ENCODE measurements at regions of chr11 and their contacts with region 1.

Region 1: DNA sequence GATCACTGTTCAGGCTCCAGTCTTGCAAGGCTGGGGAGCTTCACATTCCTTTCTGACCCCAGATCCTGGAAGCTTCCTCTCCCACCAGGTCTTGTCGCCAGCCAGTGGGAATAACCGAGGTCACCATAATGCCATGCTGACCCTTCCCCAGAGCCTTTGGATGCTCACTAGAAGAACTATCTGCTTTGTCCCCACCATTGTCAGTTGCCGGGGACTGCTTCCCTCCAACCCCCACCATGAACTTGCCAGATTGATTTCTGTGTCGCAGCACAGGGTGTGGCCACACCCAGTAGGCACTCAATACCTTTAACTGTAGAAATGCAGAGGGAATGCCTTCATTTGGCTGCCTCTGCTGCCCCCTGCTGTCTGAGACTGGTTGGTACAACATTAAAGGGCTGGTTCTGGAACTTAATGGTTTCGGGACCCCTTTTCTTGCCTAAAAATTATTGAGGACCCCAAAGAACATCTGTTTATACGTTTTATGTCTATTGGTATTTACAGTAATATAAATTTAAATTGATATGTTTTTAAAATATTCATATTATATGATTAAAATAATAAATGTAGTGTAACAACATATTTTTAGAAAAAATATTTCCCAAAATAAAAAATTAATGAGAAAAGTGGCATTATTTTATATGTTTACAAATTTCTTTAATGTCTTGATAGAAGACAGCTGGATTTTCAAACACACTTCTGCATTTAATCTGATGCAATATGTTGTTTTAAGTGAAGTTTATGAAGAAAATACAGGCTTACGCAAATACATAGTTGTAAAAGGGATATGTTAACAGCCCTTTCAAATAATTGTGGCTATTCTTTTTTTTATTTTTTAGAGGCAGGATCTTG is 6.7 kb upstream of the GDPD5 start:
- DNase-seq: peak; percentile 68
- H3K4me3 ChIP-seq: no peak overlapping the region
- H3K27ac ChIP-seq: no peak overlapping the region
- H3K4me1 ChIP-seq: 0 out of 2 replicates have a peak, but pooled peaks cover 3% of the 10 kb centered on the region
- H3K27me3 ChIP-seq: no peaks in the 10 kb centered on the region

Region 2: DNA sequence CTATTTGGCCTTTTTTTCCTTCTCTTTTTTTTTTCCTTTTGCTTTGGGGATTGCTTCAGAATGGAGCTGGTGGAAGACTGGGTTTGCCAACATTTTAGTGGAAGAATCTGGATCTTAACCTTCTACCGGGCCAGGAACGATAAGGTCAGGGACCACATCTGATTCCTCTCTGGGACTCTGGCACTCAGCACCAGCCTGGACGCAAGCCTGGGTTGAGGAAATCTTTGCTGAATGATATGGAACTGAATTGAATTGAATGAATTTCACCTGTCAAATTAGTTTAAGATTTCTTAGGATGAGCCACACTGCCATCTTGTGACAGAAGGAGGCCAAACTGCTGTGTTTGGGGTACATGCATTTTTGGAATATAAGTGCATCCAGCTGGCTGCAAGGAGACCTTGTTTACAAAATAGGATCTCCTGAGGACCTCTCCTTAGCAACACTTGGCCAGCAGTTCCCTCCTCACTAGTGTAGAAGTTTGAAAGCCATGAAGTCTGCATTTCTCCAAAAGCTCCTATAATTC is 261.5 kb before region 1 on chr11:
- in situ Hi-C with region 1: loop called (anchors 10 kb)
- DNase-seq: peak; percentile 47
- H3K4me3 ChIP-seq: no peak overlapping the region
- H3K27ac ChIP-seq: no peak overlapping the region
- H3K4me1 ChIP-seq: no peaks in the 10 kb centered on the region
- H3K27me3 ChIP-seq: no peaks in the 10 kb centered on the region

Region 3: GRCh38 chr11:75445315-75445953 is 87.0 kb before region 1 on chr11:
- in situ Hi-C with region 1: loop called (anchors 5 kb)
- DNase-seq: peak; percentile 59
- H3K4me3 ChIP-seq: no peak overlapping the region
- H3K27ac ChIP-seq: no peak overlapping the region
- H3K4me1 ChIP-seq: no peaks in the 10 kb centered on the region
- H3K27me3 ChIP-seq: no peaks in the 10 kb centered on the region

Region 4: DNA sequence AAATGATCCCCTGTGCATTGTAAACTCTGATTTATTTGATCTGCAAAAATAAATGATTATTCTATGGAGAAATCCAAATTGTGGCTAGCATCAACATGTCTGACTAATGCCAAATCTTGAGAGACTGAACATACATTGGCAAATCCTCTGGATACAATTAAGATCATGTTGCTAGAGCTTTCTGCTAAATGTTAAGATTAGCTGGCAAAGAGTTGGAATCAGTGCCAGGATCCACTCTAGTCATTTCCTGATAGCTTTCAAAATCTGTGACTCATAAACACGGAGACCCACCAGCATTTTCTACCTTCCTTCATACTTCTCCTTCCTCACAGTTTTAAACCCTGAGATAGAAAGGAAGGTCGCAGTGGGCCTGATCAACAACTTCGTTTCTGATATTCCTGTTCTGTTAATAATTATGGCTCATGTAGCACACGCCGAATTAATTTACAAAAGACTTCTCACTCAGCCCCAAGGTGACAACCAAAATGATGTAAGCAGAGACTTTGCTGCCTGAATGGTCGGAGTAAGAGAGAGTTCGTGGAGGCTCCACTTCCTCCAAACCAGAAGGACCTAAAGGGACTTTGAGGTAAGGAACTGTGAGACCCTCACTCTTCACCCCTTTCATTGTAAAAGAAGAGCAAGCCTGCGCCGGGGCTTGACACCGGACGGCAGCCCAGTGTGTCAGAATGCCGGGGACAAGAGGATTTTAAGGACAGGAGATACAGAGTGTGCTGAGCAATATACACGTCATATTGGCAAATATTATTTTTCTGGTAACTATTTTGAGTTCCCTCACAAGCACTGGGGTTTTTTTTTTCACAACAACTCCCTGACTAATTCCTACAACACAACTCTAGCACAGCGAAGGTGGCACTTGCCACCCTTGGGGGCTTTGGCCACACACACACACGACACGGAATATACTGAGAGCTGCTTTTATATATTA is 71.6 kb after region 1 on chr11:
- in situ Hi-C with region 1: no loop called
- DNase-seq: peak; percentile 96
- H3K4me3 ChIP-seq: peak overlapping the region; percentile 64
- H3K27ac ChIP-seq: peak overlapping the region; percentile 98
- H3K4me1 ChIP-seq: peaks cover 25% of the 10 kb centered on the region
- H3K27me3 ChIP-seq: no peaks in the 10 kb centered on the region

Measured in GM23248 (cell line).